ENCODE measurements at regions of chr15 and their contacts with region 1.

Region 1: DNA sequence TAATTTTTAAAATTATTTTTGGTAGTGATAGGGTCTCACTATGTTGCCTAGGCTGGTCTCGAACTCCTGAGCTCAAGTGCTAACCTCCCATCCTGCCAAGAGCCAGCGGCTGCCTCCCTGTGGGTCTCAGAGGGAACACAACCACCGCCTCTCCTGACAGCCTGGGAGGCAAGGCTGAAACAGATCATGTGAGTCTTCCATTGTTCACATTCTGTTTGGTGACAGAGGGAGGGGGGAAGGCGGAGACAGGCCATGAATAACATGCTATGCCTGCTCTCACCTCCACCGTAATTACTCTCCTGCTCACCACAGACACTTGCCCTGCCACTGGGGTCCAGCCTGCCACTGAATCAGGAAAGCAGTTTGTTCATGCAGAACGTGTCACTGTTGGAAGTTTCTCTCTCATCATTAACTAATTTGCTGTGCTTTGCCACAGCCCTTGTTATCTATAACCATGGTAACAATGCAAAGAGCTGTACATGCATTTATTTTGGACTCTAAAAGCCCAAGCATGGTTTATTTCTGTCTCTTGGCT is 78.4 kb upstream of the RASGRF1 start:
- DNase-seq: peak in 1 of 3 donors; percentile 10
- H3K4me3 ChIP-seq: no peak overlapping the region
- H3K27ac ChIP-seq: no peak overlapping the region
- H3K4me1 ChIP-seq: no peaks in the 10 kb centered on the region
- H3K27me3 ChIP-seq: peaks cover 0 to 36% (median 9%) of the 10 kb centered on the region in 5 experiments

Region 2: DNA sequence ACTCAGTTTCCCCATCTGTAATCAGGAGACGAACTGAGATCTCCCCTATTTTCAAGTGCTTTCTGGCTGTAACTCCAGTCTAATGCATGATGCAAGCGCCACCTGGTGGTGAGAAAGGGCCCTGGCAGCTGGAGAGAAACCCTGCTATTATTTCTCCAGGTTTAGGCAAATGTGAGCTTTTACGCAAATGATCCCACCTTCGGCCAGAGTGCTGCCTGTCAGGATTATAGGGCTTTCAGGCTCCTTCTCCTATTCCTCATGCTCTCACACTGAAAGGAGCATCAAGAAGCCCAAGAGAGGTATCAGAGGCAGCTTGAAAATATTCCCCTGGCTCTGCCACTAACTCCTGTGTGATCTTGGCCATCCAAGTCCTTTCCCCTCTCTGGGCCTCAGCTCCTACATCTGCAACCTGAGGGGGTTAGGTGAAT is 15.5 kb after region 1 on chr15:
- CTCF ChIA-PET with region 1: interaction called, 12 read pairs
- POLR2A ChIA-PET with region 1: no interaction called
- DNase-seq: peak; percentile 50 to 72 (median 65)
- H3K4me3 ChIP-seq: no peak overlapping the region
- H3K27ac ChIP-seq: no peak overlapping the region
- H3K4me1 ChIP-seq: no peaks in the 10 kb centered on the region
- H3K27me3 ChIP-seq: no peaks in the 10 kb centered on the region

Region 3: DNA sequence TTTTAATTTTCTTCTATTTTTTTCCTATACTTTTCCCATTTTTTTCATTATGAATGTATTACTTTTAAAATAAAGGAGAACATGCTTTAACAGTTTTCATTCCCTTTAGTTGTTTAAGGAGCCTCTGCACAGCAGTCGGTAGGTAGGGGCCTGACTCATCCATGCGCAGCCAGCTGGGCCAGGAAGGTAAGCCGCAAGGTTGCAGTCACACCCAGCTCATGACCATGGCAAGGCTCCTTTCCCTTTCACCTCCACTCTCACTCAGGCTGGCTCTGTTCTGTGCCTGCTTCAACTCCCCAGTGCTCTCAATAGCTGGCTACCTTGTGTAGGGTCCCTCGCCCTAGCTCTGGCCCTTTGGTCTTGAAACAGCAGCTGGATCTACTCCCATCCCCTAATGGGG is 96.2 kb after region 1 on chr15:
- CTCF ChIA-PET with region 1: no interaction called
- POLR2A ChIA-PET with region 1: no interaction called
- DNase-seq: no peak
- H3K4me3 ChIP-seq: no peak overlapping the region
- H3K27ac ChIP-seq: no peak overlapping the region
- H3K4me1 ChIP-seq: no peaks in the 10 kb centered on the region
- H3K27me3 ChIP-seq: peaks cover 3 to 14% (median 5%) of the 10 kb centered on the region in 5 experiments

Measured in common myeloid progenitor, CD34-positive (primary cell).